ENCODE measurements at regions of chr17 and their contacts with region 1.

Region 1: GRCh38 chr17:49315551-49316257 is 46.3 kb downstream of the ZNF652 start:
- DNase-seq: peak; percentile 96
- H3K4me3 ChIP-seq: peak overlapping the region; percentile 41
- H3K27ac ChIP-seq: peak overlapping the region; percentile 35
- H3K4me1 ChIP-seq: peaks cover 10% of the 10 kb centered on the region
- H3K27me3 ChIP-seq: no peaks in the 10 kb centered on the region

Region 2: GRCh38 chr17:48816774-48817590 is 498.7 kb before region 1 on chr17 and contains the start of gene TTLL6:
- in situ Hi-C with region 1: no loop called
- DNase-seq: peak; percentile 67
- H3K4me3 ChIP-seq: peak within 1 kb of the TSS; percentile 61
- H3K27ac ChIP-seq: no peak within 1 kb of the TSS
- H3K4me1 ChIP-seq: no peaks in the 10 kb centered on the region
- H3K27me3 ChIP-seq: peaks cover 19% of the 10 kb centered on the region
- total RNA-seq, gene TTLL6: not detected in 2 replicates

Region 3: DNA sequence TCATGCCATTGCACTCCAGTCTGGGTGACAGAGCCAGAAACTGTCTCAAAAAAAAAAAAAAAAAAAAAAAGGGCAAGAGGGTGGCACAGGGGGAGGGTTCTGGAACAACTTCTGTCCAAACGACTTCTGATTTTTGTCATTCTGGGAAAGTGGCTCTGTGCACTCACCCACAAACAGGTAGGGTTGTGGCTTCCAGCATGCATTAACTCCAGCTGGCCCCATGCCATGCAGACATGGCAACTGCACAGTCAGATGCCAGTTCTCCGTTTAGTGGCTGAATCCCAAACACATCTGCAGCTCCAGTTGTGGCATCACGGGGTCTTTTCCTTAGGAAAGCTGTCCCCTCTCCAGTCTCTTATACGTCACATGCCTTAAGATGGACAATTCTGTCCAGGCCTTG is 152.8 kb before region 1 on chr17:
- in situ Hi-C with region 1: no loop called
- DNase-seq: no peak
- H3K4me3 ChIP-seq: no peak overlapping the region
- H3K27ac ChIP-seq: no peak overlapping the region
- H3K4me1 ChIP-seq: no peaks in the 10 kb centered on the region
- H3K27me3 ChIP-seq: peaks cover 33% of the 10 kb centered on the region; the same call in 1 of the 2 replicates

Region 4: DNA sequence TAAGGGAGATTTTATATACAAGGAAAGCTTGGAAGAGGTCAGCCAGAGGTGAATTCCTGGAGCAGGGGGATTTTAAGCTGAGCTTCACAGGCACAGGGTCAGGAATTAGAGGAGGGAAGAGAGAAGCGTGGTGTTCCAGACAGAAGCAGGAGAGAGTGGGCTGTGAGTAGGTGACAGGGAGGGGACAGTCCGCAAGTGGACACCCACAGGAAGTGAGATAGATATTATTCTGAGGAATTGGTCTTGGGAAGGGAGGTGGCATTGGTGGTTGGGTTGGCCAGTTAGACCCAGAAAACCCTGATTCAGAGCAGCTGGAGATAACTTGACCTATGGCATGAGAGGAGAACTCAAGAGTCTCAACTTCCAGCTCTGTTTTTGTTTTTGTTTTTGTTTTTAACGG is 84.3 kb after region 1 on chr17:
- in situ Hi-C with region 1: loop called (anchors 5 kb)
- DNase-seq: no peak
- H3K4me3 ChIP-seq: no peak overlapping the region
- H3K27ac ChIP-seq: no peak overlapping the region
- H3K4me1 ChIP-seq: no peaks in the 10 kb centered on the region
- H3K27me3 ChIP-seq: no peaks in the 10 kb centered on the region

Region 5: DNA sequence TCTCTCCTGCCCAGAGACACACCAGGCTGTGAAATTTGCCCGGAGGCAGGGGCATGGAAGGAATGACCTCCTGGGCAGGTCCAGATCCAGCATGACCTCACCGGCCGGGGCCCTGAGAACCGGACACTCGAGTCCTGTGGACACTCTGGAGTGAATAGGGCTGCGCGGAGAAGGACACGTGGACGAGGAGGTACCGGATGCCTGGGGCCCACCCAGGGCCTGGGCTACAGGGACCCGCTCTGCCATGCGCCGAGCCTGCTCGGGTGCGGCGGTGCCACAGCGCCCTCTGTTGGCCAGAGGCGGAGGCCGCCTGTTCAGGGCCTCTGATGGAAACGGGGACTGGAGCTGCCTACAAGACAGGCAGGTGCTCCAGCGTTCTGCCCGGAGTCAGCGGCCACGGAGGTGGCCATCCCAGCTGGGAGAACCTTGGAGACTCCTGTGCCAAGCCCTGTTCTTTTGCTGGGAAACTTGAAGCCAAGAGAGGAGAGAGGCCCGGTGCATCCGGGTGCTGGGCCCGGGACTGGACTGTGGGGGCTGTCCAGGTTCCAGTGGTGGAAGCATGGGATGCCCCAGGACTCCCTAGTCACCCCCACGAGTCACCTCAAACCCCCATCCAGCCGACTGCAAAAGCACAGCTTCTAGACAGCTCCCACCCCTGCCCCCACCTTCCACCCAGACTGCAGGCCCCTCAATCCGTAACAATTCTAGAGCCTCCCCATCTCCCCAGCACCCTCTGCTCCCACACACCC is 240.7 kb after region 1 on chr17:
- in situ Hi-C with region 1: loop called (anchors 10 kb)
- DNase-seq: peak; percentile 73
- H3K4me3 ChIP-seq: peak overlapping the region; percentile 33; the same call in 1 of the 2 replicates
- H3K27ac ChIP-seq: no peak overlapping the region
- H3K4me1 ChIP-seq: no peaks in the 10 kb centered on the region
- H3K27me3 ChIP-seq: peaks cover 4% of the 10 kb centered on the region; the same call in 1 of the 2 replicates

Region 6: GRCh38 chr17:49667854-49668253 is 352.1 kb after region 1 on chr17:
- in situ Hi-C with region 1: no loop called
- DNase-seq: no peak
- H3K4me3 ChIP-seq: no peak overlapping the region
- H3K27ac ChIP-seq: no peak overlapping the region
- H3K4me1 ChIP-seq: peaks cover 19% of the 10 kb centered on the region
- H3K27me3 ChIP-seq: no peaks in the 10 kb centered on the region